Right cardiac atrium (tissue), 5 donors: ENCODE measurements at regions of chr1 and their contacts with region 1.

Region 1: GRCh38 chr1:205061665-205062069 is 18.7 kb downstream of the CNTN2 start:
- DNase-seq: peak; percentile 61 to 89 (median 88)
- ATAC-seq: peak; percentile 52 to 64
- H3K4me3 ChIP-seq: no peak overlapping the region
- H3K27ac ChIP-seq: no peak overlapping the region
- H3K4me1 ChIP-seq: no peaks in the 10 kb centered on the region
- H3K27me3 ChIP-seq: no peaks in the 10 kb centered on the region

Region 2: GRCh38 chr1:204180133-204180532 is 881.5 kb before region 1 on chr1:
- intact Hi-C with region 1: no loop called
- DNase-seq: no peak
- ATAC-seq: no peak
- H3K4me3 ChIP-seq: no peak overlapping the region
- H3K27ac ChIP-seq: no peak overlapping the region
- H3K4me1 ChIP-seq: no peaks in the 10 kb centered on the region
- H3K27me3 ChIP-seq: no peaks in the 10 kb centered on the region

Region 3: DNA sequence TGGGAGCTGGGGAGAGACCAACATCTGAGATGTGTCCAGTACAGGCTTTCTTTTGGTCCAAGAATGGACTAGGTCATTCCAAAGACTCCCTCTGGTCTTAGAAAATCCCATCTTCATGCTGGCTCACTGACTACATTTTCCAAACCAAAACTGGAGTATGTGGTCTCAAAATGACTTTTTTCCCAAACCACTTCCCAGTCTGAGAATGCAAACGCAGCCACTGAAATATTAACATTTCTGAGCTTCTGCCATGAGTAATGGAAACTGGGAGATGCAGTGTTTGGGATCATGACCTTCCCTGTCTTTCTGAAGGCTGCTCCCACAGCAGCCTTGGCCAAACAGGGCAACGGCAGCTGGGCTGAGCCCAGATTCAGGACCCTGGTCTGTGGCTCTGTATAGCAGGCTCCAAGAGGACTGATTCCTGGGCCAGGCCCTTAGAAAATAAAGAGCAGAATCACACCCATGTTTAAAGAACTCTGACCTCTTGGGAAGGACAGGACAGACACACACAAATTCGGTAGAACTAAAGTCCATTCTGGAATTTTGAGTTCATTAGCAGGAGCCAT is 80.7 kb before region 1 on chr1:
- intact Hi-C with region 1: loop called in 3 of 4 experiments (anchors 5 kb)
- DNase-seq: no peak
- ATAC-seq: no peak
- H3K4me3 ChIP-seq: no peak overlapping the region
- H3K27ac ChIP-seq: no peak overlapping the region
- H3K4me1 ChIP-seq: no peaks in the 10 kb centered on the region
- H3K27me3 ChIP-seq: no peaks in the 10 kb centered on the region